ENCODE measurements at regions of chr6 and their contacts with region 1.

Region 1: GRCh38 chr6:84808491-84809061 is 44.2 kb upstream of the TBX18 start:
- DNase-seq: no peak
- H3K4me3 Mint-ChIP-seq: no peak overlapping the region
- H3K27ac Mint-ChIP-seq: no peak overlapping the region
- H3K4me1 Mint-ChIP-seq: no peaks in the 10 kb centered on the region
- H3K27me3 Mint-ChIP-seq: no peaks in the 10 kb centered on the region

Region 2: GRCh38 chr6:84536914-84537638 is 271.5 kb before region 1 on chr6:
- intact Hi-C with region 1: no loop called
- DNase-seq: no peak
- H3K4me3 Mint-ChIP-seq: no peak overlapping the region
- H3K27ac Mint-ChIP-seq: no peak overlapping the region
- H3K4me1 Mint-ChIP-seq: no peaks in the 10 kb centered on the region
- H3K27me3 Mint-ChIP-seq: no peaks in the 10 kb centered on the region

Region 3: DNA sequence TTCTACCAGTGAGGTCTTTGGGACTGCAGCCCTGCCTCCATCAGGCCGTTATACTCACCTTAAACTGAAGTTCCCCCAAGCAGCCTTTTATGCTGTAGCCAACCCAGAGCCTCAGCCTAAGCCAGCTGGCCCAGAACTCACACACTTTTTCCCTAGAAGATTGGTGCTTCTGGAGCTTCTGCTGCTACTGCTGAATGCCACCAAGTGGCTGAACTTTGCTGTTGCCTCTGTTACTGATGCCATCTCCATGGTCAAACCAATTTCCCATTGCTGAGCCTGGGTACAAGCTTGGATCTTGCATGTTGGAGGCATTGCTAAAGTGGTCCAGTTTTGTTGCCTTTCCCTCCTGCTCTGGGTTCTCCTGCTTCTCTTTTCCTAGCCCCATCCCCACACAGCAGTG is 29.2 kb before region 1 on chr6:
- intact Hi-C with region 1: loop called (anchors 1 kb)
- DNase-seq: no peak
- H3K4me3 Mint-ChIP-seq: no peak overlapping the region
- H3K27ac Mint-ChIP-seq: no peak overlapping the region
- H3K4me1 Mint-ChIP-seq: no peaks in the 10 kb centered on the region
- H3K27me3 Mint-ChIP-seq: peaks cover 26% of the 10 kb centered on the region

Measured in activated T-helper 2 cell treated with anti-CD3 and anti-CD28 coated beads, Interferon-gamma antibody, Interleukin-2, Interleukin-4, amounts not matched to agents 10 μg/mL and 5 μg/mL and 100 μg/mL, durations not matched to agents 14 hours and 24 hours and 36 hours (primary cell).